Tibial artery (tissue), 4 donors: ENCODE measurements at regions of chr5 and their contacts with region 1.

Region 1: GRCh38 chr5:56814963-56815658 is at the start of gene MAP3K1:
- DNase-seq: peak; percentile 57 to 85
- H3K4me3 ChIP-seq: peak within 1 kb of the TSS; percentile 62 to 91
- H3K27ac ChIP-seq: peak within 1 kb of the TSS; percentile 82 to 85
- H3K4me1 ChIP-seq: peaks cover 0 to 29% (median 5%) of the 10 kb centered on the region in 4 donors
- H3K27me3 ChIP-seq: no peaks in the 10 kb centered on the region
- CTCF ChIP-seq: no peak

Region 2: GRCh38 chr5:55994574-55995333 is 820.4 kb before region 1 on chr5 and contains the start of gene IL6ST:
- intact Hi-C with region 1: loop called (anchors 10 kb)
- DNase-seq: peak; percentile 97 to 98
- H3K4me3 ChIP-seq: peak within 1 kb of the TSS; percentile 77 to 89
- H3K27ac ChIP-seq: peak within 1 kb of the TSS; percentile 94 to 97
- H3K4me1 ChIP-seq: peaks cover 0 to 31% (median 26%) of the 10 kb centered on the region in 4 donors
- H3K27me3 ChIP-seq: no peaks in the 10 kb centered on the region
- CTCF ChIP-seq: peak in 1 of 2 experiments; percentile 24

Region 3: DNA sequence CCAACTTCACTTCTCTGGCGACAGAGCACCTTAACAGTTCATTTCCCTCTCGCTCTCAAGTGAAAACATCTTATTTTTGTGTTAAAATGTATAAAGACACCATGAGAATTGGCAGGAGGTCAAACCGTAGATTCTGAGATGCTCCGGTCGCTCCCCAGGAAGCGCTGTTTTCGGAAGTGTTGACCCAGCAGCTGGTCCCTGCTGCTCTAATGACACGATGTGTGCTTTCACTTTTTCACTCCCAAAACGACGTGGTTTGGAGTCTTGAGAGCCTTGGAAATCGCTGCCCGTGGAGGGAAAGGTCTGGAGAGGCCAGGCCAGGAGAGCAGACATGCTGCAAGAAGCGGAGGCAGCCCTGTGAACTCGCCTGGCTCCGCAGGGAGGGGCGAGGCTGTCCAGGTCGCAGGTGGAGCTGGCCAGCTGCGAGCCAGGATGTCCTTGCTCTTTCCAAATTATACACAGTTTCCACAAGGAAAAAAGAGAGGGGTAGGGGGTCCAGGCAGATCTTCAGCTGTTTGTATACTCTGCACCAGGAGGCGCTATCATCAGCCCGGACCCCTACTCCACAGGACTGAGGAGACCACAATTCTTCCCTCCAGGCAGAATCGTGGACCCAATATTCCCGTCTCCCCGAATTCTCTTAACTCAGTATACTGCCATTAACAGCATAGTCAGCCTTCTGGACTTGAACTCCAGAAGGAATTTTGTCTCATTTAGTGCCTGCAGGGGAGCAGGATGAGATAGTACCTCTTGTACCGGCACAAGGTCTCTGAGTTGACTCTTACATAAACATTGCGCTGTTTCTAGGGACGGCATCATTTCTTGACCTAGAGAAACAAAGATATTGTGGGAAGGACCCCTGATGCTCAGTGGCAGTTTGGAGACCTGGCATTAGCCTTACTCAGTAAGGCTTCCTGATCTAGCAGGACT is 333.4 kb before region 1 on chr5:
- intact Hi-C with region 1: loop called (anchors 10 kb)
- DNase-seq: peak; percentile 29 to 69
- H3K4me3 ChIP-seq: peak overlapping the region; percentile 66 to 94
- H3K27ac ChIP-seq: peak overlapping the region; percentile 89 to 96
- H3K4me1 ChIP-seq: peaks cover 0 to 39% (median 13%) of the 10 kb centered on the region in 4 donors
- H3K27me3 ChIP-seq: no peaks in the 10 kb centered on the region
- CTCF ChIP-seq: peak in 1 of 2 experiments; percentile 8